Natural killer cell (primary cell): ENCODE measurements at regions of chr15 and their contacts with region 1.

Region 1: GRCh38 chr15:75639709-75640482 is at the start of gene IMP3:
- DNase-seq: peak; percentile 89 to 97
- ATAC-seq: peak; percentile 91 to 97 (median 93)
- H3K4me3 ChIP-seq: peak within 1 kb of the TSS; percentile 89
- H3K4me3 Mint-ChIP-seq: peak within 1 kb of the TSS; percentile 91
- H3K27ac ChIP-seq: peak within 1 kb of the TSS; percentile 83
- H3K27ac Mint-ChIP-seq: peak within 1 kb of the TSS; percentile 89 to 93
- H3K4me1 ChIP-seq: peaks cover 40% of the 10 kb centered on the region
- H3K4me1 Mint-ChIP-seq: peaks cover 30 to 39% of the 10 kb centered on the region in 2 donors
- H3K27me3 ChIP-seq: no peaks in the 10 kb centered on the region
- H3K27me3 Mint-ChIP-seq: peaks cover 0 to 2% of the 10 kb centered on the region in 2 donors
- CTCF ChIP-seq: no peak
- total RNA-seq, gene IMP3: 22.9 to 37.1 (median 35.8) TPM

Region 2: GRCh38 chr15:75367913-75368688 is 271.8 kb before region 1 on chr15 and contains the start of gene MAN2C1:
- intact Hi-C with region 1: loop called (anchors 10 kb)
- DNase-seq: peak; percentile 85 to 97
- ATAC-seq: peak; percentile 92 to 95 (median 92)
- H3K4me3 ChIP-seq: peak within 1 kb of the TSS; percentile 57
- H3K4me3 Mint-ChIP-seq: peak within 1 kb of the TSS; percentile 89
- H3K27ac ChIP-seq: peak within 1 kb of the TSS; percentile 93
- H3K27ac Mint-ChIP-seq: peak within 1 kb of the TSS; percentile 90 to 92
- H3K4me1 ChIP-seq: peaks cover 16% of the 10 kb centered on the region
- H3K4me1 Mint-ChIP-seq: peaks cover 14 to 21% of the 10 kb centered on the region in 2 donors
- H3K27me3 ChIP-seq: no peaks in the 10 kb centered on the region
- H3K27me3 Mint-ChIP-seq: no peaks in the 10 kb centered on the region
- CTCF ChIP-seq: peak; percentile 14
- total RNA-seq, gene MAN2C1: 375 to 476 (median 385) TPM

Region 3: GRCh38 chr15:75453703-75454470 is 186.0 kb before region 1 on chr15:
- intact Hi-C with region 1: loop called (anchors 1 kb)
- DNase-seq: peak; percentile 97 to 99
- ATAC-seq: peak; percentile 43 to 67 (median 51)
- H3K4me3 ChIP-seq: peak overlapping the region; percentile 92
- H3K4me3 Mint-ChIP-seq: peak overlapping the region; percentile 98
- H3K27ac ChIP-seq: peak overlapping the region; percentile 96
- H3K27ac Mint-ChIP-seq: peak overlapping the region; percentile 98 to 99
- H3K4me1 ChIP-seq: peaks cover 38% of the 10 kb centered on the region
- H3K4me1 Mint-ChIP-seq: peaks cover 45 to 49% of the 10 kb centered on the region in 2 donors
- H3K27me3 ChIP-seq: no peaks in the 10 kb centered on the region
- H3K27me3 Mint-ChIP-seq: no peaks in the 10 kb centered on the region
- CTCF ChIP-seq: no peak

Region 4: GRCh38 chr15:75508840-75509532 is 130.9 kb before region 1 on chr15:
- intact Hi-C with region 1: loop called (anchors 1 kb)
- DNase-seq: peak in 1 of 2 donors; percentile 67
- ATAC-seq: no peak
- H3K4me3 ChIP-seq: no peak overlapping the region
- H3K4me3 Mint-ChIP-seq: no peak overlapping the region
- H3K27ac ChIP-seq: no peak overlapping the region
- H3K27ac Mint-ChIP-seq: no peak overlapping the region
- H3K4me1 ChIP-seq: no peaks in the 10 kb centered on the region
- H3K4me1 Mint-ChIP-seq: no peaks in the 10 kb centered on the region
- H3K27me3 ChIP-seq: no peaks in the 10 kb centered on the region
- H3K27me3 Mint-ChIP-seq: no peaks in the 10 kb centered on the region
- CTCF ChIP-seq: peak; percentile 11

Region 5: GRCh38 chr15:75565062-75565970 is 74.6 kb before region 1 on chr15:
- intact Hi-C with region 1: no loop called
- DNase-seq: no peak
- ATAC-seq: no peak
- H3K4me3 ChIP-seq: no peak overlapping the region
- H3K4me3 Mint-ChIP-seq: no peak overlapping the region
- H3K27ac ChIP-seq: no peak overlapping the region
- H3K27ac Mint-ChIP-seq: peak overlapping the region in 1 of 2 donors; percentile 23
- H3K4me1 ChIP-seq: no peaks in the 10 kb centered on the region
- H3K4me1 Mint-ChIP-seq: peaks cover 0 to 29% of the 10 kb centered on the region in 2 donors
- H3K27me3 ChIP-seq: no peaks in the 10 kb centered on the region
- H3K27me3 Mint-ChIP-seq: no peaks in the 10 kb centered on the region
- CTCF ChIP-seq: no peak

Region 6: GRCh38 chr15:75578948-75579920 is 60.7 kb before region 1 on chr15 and contains the start of gene PTPN9:
- intact Hi-C with region 1: loop called (anchors 1 kb)
- DNase-seq: peak; percentile 52 to 79
- ATAC-seq: peak; percentile 80 to 86 (median 83)
- H3K4me3 ChIP-seq: peak within 1 kb of the TSS; percentile 83
- H3K4me3 Mint-ChIP-seq: peak within 1 kb of the TSS; percentile 95
- H3K27ac ChIP-seq: peak within 1 kb of the TSS; percentile 64
- H3K27ac Mint-ChIP-seq: peak within 1 kb of the TSS; percentile 75 to 92
- H3K4me1 ChIP-seq: peaks cover 18% of the 10 kb centered on the region
- H3K4me1 Mint-ChIP-seq: peaks cover 22 to 23% of the 10 kb centered on the region in 2 donors
- H3K27me3 ChIP-seq: no peaks in the 10 kb centered on the region
- H3K27me3 Mint-ChIP-seq: no peaks in the 10 kb centered on the region
- CTCF ChIP-seq: peak; percentile 46
- total RNA-seq, gene PTPN9: 28.3 to 33.0 (median 28.9) TPM

Region 7: DNA sequence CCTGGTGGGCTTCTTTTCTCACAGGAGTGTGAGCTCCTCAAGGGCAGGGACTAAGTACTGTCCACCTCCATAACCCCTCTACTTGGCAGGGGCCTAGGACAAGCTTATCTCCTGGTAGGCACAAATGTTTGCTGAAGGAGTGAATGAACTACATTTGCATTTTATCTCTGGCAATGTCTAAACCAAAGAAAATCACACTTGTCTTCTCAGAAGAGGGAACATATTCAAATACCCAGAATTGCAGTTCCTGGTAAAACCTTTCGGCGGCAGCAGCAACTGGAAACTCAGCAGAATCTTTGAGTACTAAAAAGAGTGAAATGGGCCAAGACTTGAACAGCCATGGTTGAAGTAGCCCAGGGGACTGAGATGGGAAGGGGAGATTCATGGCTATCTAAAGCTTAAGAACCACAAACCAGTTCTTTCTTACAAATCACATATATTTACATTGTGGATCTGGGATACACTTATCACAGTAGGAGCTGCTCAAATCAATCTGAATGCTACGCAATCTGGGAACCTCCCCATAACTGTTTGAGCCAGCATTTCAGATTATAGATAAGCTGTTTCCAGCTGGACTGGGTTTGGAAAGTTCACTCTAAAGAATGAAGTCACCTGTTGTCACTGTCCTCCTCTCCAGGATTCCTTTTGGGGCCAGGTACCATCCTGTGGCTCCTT is 42.1 kb before region 1 on chr15:
- intact Hi-C with region 1: loop called (anchors 2 kb)
- DNase-seq: peak in 1 of 2 donors; percentile 62
- ATAC-seq: peak; percentile 52 to 70 (median 69)
- H3K4me3 ChIP-seq: no peak overlapping the region
- H3K4me3 Mint-ChIP-seq: no peak overlapping the region
- H3K27ac ChIP-seq: no peak overlapping the region
- H3K27ac Mint-ChIP-seq: peak overlapping the region; percentile 16 to 64
- H3K4me1 ChIP-seq: peaks cover 14% of the 10 kb centered on the region
- H3K4me1 Mint-ChIP-seq: peaks cover 13 to 21% of the 10 kb centered on the region in 2 donors
- H3K27me3 ChIP-seq: no peaks in the 10 kb centered on the region
- H3K27me3 Mint-ChIP-seq: no peaks in the 10 kb centered on the region
- CTCF ChIP-seq: peak; percentile 55

Region 8: GRCh38 chr15:75625542-75626347 is 14.2 kb before region 1 on chr15 and contains the start of gene SNUPN:
- intact Hi-C with region 1: loop called (anchors 1 kb)
- DNase-seq: peak; percentile 85 to 97
- ATAC-seq: peak; percentile 93 to 98 (median 95)
- H3K4me3 ChIP-seq: peak within 1 kb of the TSS; percentile 100
- H3K4me3 Mint-ChIP-seq: peak within 1 kb of the TSS; percentile 90
- H3K27ac ChIP-seq: peak within 1 kb of the TSS; percentile 93
- H3K27ac Mint-ChIP-seq: peak within 1 kb of the TSS; percentile 98 to 99
- H3K4me1 ChIP-seq: peaks cover 13% of the 10 kb centered on the region
- H3K4me1 Mint-ChIP-seq: peaks cover 19 to 21% of the 10 kb centered on the region in 2 donors
- H3K27me3 ChIP-seq: no peaks in the 10 kb centered on the region
- H3K27me3 Mint-ChIP-seq: no peaks in the 10 kb centered on the region
- CTCF ChIP-seq: no peak
- total RNA-seq, gene SNUPN: 13.8 to 20.7 (median 14.8) TPM